ENCODE measurements at regions of chr7 and their contacts with region 1.

Region 1: GRCh38 chr7:131235489-131236317 is 92.0 kb upstream of the MKLN1 start:
- DNase-seq: peak; percentile 64 to 90
- ATAC-seq: peak; percentile 63 to 81 (median 77)
- H3K4me3 ChIP-seq: no peak overlapping the region
- H3K4me3 Mint-ChIP-seq: peak overlapping the region; percentile 65
- H3K27ac ChIP-seq: peak overlapping the region; percentile 59
- H3K27ac Mint-ChIP-seq: peak overlapping the region; percentile 91 to 97
- H3K4me1 ChIP-seq: peaks cover 26% of the 10 kb centered on the region
- H3K4me1 Mint-ChIP-seq: peaks cover 53 to 57% of the 10 kb centered on the region in 2 donors
- H3K27me3 ChIP-seq: no peaks in the 10 kb centered on the region
- H3K27me3 Mint-ChIP-seq: no peaks in the 10 kb centered on the region
- CTCF ChIP-seq: no peak

Region 2: DNA sequence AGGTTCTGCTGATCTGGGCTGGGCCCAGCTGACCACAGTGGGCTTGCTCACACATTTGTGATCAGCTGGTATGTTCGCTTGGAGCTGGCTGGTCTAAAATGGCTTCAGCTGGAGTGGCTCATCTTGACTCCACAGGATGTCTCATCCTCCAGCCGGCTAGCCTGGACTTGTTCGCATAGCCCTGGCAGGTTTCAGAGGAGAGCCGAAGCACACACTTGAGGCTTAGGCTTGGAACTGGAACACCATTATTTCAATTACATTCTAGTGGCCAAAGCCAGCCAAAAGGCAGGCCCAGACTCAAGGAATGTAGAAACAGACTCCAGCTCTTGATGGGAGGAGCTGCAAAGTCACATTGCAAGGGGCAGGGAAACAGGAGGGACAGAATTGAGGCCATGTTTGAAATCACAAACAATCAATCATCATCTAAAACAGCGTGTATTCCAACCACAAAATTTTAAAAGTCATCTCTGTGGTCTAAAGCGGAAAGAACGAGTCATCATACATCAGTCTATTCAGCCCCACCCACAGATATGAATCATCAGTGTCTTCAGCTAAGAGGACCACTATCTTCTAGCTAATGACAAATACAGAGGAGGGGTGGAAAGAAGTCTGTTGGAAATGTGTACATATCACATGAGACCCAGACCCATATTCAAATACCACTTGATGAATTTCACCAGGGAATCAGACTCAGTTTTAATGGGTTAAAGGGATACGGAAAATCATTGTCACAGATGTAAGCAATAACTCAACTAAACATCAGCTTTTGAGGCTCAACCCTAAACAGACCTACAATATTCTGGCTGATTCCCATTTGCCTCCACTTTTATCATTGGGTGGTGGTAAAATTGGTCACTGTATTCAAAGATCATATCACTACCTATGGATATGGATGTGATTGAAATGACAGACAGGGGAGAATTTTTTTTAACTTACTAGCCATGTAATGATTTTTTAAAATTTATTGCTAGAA is 47.0 kb before region 1 on chr7:
- intact Hi-C with region 1: loop called (anchors 1 kb)
- DNase-seq: peak; percentile 37 to 88
- ATAC-seq: peak; percentile 88 to 97 (median 96)
- H3K4me3 ChIP-seq: no peak overlapping the region
- H3K4me3 Mint-ChIP-seq: peak overlapping the region; percentile 57
- H3K27ac ChIP-seq: peak overlapping the region; percentile 67
- H3K27ac Mint-ChIP-seq: peak overlapping the region; percentile 87 to 96
- H3K4me1 ChIP-seq: peaks cover 12% of the 10 kb centered on the region
- H3K4me1 Mint-ChIP-seq: peaks cover 27 to 28% of the 10 kb centered on the region in 2 donors
- H3K27me3 ChIP-seq: no peaks in the 10 kb centered on the region
- H3K27me3 Mint-ChIP-seq: no peaks in the 10 kb centered on the region
- CTCF ChIP-seq: no peak